IMR-90 (cell line): ENCODE measurements at regions of chr2 and their contacts with region 1.

Region 1: DNA sequence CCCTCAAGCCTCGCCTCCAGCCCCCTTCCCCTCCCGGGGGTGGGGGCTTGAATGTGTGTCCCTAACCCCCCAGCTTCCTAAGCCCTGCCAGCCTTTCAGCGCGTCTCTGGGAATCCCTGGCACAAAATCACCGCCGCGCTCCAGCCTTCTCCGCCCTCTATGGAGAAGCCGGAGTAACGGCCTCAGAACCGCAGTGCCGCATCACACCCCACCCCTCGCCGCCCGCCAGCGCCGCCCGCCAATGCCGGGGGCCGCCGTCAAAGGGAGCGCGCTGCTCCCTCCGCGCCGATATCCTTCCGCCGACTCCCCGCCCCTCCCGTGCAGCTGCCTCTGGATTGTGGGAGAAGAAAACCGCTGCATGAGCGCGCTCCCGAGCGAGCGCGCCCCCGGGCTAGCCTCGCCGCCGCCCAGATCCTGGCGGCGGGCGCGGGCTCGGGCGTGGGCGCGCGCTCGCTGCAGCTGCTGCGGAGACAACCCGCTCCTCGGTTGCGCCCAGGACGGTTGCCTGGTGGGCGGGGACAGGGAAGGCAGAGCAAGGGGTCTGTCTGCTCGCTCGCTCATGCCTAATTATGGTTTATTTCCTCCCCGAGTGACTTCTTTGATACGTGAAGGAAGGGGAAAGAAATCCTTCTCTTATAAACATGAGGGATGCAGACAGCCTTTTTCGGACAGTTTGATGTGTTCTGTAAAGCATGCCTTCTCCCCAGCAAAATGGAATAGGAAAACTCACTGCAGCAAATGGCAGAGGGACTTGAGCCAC is at the start of gene CCDC88A:
- DNase-seq: peak; percentile 97
- ATAC-seq: peak; percentile 94
- H3K4me3 ChIP-seq: peak within 1 kb of the TSS; percentile 82
- H3K27ac ChIP-seq: peak within 1 kb of the TSS; percentile 92
- H3K4me1 ChIP-seq: peaks cover 2% of the 10 kb centered on the region; the same call in 1 of the 2 replicates
- H3K27me3 ChIP-seq: peaks cover 2% of the 10 kb centered on the region; the same call in 1 of the 2 replicates
- CTCF ChIP-seq: peak; percentile 24; the same call in 1 of the 2 replicates
- POLR2A ChIP-seq: peak; percentile 93
- RAD21 ChIP-seq: no peak
- total RNA-seq, gene CCDC88A: 63.8 and 66.1 TPM in 2 replicates

Region 2: DNA sequence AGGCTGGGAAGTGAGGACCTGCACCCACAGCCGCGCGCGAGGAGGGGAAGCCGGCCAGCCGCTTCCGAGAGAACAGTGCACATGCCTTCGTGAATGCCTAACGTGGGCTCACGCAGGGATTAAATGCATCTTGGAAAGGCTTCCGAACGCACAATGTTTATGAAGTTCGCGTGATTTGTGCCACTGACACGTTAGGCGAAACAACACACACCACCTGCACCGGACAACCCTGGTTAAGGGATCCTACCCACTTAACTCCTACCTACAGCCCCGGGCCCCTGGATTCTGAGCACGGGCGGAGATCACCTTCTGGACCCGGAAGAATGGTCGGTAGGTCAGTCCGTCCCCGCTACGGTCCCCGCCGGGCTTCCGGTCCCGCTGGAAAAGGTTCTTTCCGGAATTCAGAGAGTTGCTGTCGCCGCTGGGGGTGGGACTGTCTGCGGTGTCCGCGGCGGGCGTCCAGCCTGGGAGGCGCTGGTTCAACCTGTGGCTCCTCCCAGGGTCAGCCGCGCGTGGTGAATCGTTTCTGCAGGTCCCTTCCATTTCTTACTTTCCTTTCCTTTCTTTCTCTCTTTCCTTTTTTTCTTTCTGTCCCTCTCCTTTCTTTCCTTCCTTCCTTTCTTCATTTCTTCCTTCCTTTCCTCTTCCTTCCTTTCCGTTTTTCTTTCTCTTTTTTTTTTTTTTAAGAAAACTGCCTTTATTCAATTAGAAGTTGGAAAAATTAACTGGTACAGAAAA is 150.8 kb before region 1 on chr2 and contains the start of gene MTIF2:
- CTCF ChIA-PET with region 1: no interaction called
- POLR2A ChIA-PET with region 1: no interaction called
- dilution Hi-C with region 1: no loop called
- in situ Hi-C with region 1: no loop called
- intact Hi-C with region 1: loop called (anchors 1 kb)
- DNase-seq: peak; percentile 91
- ATAC-seq: peak; percentile 99
- H3K4me3 ChIP-seq: peak within 1 kb of the TSS; percentile 74
- H3K27ac ChIP-seq: peak within 1 kb of the TSS; percentile 85
- H3K4me1 ChIP-seq: no peaks in the 10 kb centered on the region; the same call in 1 of the 2 replicates
- H3K27me3 ChIP-seq: no peaks in the 10 kb centered on the region
- CTCF ChIP-seq: 0 out of 2 replicates have a peak, but pooled peaks have one; percentile 11
- POLR2A ChIP-seq: peak; percentile 81
- RAD21 ChIP-seq: peak; percentile 32
- total RNA-seq, gene MTIF2: 22.6 and 33.3 TPM in 2 replicates

Region 3: DNA sequence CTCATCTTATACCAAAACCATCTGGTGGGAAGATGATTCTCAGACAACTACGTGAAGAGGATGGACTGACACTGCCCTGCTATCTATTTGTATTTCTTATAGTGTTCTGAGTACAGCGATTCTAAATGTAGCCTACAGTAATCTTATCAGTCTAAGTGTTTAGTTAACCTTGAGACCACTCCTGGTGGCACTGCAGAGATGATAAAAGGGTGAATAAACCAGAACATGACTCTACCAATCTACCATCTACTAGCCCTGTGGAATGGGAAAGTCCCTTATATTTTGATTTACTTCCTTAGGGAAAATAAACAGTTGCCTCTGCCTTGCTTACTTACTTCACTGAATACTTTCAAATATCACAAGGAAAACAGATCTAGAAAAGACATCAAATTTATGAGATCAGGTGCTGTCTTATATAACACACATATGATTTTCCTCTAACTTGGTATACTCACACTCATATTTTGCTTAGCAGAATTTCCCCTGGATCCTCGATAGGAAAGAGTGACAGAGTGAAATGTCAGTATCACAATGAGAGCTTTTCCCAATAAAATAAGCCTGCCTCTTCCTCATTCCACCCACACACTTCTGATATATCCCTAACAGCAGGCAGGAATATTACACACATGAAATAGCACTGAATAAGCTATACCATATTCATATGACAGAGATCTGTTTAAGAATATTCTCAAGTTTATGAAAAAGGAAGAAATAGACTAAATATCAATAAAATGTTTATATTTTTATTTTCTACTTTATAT is 92.2 kb before region 1 on chr2:
- CTCF ChIA-PET with region 1: interaction called, 4 read pairs
- POLR2A ChIA-PET with region 1: no interaction called
- dilution Hi-C with region 1: no loop called
- in situ Hi-C with region 1: no loop called
- intact Hi-C with region 1: loop called (anchors 1 kb)
- DNase-seq: no peak
- ATAC-seq: no peak
- H3K4me3 ChIP-seq: no peak overlapping the region
- H3K27ac ChIP-seq: no peak overlapping the region
- H3K4me1 ChIP-seq: no peaks in the 10 kb centered on the region
- H3K27me3 ChIP-seq: no peaks in the 10 kb centered on the region
- CTCF ChIP-seq: no peak
- POLR2A ChIP-seq: no peak
- RAD21 ChIP-seq: no peak

Region 4: GRCh38 chr2:55364189-55365055 is 55.4 kb before region 1 on chr2:
- CTCF ChIA-PET with region 1: no interaction called
- POLR2A ChIA-PET with region 1: no interaction called
- dilution Hi-C with region 1: no loop called
- in situ Hi-C with region 1: no loop called
- intact Hi-C with region 1: loop called (anchors 5 kb)
- DNase-seq: peak; percentile 98
- ATAC-seq: peak; percentile 92
- H3K4me3 ChIP-seq: no peak overlapping the region
- H3K27ac ChIP-seq: no peak overlapping the region
- H3K4me1 ChIP-seq: no peaks in the 10 kb centered on the region; the same call in none of the 2 replicates
- H3K27me3 ChIP-seq: no peaks in the 10 kb centered on the region
- CTCF ChIP-seq: no peak
- POLR2A ChIP-seq: no peak
- RAD21 ChIP-seq: no peak

Region 5: DNA sequence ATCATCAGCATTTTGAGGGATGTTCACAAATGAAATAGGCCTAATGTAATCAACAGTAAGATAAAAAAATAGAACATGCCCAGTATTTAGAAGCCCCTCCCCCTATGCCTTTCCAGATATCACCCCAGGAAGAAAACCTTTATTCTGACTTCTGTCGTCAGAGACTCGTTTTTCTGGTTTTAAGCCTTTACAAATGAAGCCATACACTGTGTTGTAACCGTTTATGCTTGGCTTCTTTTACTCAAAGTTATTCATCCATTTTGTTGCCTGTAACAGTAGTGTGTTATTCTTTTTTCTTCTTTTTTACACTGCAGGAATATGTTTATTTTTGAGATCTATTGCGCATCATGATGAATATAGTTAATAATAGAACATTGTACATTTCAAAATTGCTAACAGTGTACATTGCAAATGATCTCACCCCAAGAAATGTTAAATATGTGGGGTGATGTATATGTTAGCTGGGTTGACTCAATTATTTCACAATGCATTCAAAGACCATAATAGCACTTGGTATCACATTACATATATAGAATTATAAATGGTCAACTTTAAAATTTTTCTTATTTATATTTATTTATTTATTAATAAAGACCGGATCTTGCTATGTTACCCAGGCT is 301.8 kb after region 1 on chr2:
- CTCF ChIA-PET with region 1: no interaction called
- POLR2A ChIA-PET with region 1: no interaction called
- dilution Hi-C with region 1: no loop called
- in situ Hi-C with region 1: no loop called
- intact Hi-C with region 1: no loop called
- DNase-seq: peak; percentile 73
- ATAC-seq: peak; percentile 44
- H3K4me3 ChIP-seq: no peak overlapping the region
- H3K27ac ChIP-seq: no peak overlapping the region
- H3K4me1 ChIP-seq: peaks cover 4% of the 10 kb centered on the region; the same call in 1 of the 2 replicates
- H3K27me3 ChIP-seq: no peaks in the 10 kb centered on the region
- CTCF ChIP-seq: no peak
- POLR2A ChIP-seq: no peak
- RAD21 ChIP-seq: no peak